ENCODE measurements at regions of chr12 and their contacts with region 1.

Region 1: GRCh38 chr12:43282106-43282505 is 269.9 kb downstream of the ADAMTS20 start:
- DNase-seq: no peak
- ATAC-seq: no peak
- H3K4me3 ChIP-seq: no peak overlapping the region
- H3K27ac ChIP-seq: no peak overlapping the region
- H3K4me1 ChIP-seq: peaks cover 0 to 21% (median 0%) of the 10 kb centered on the region in 12 donors
- H3K27me3 ChIP-seq: no peaks in the 10 kb centered on the region
- CTCF ChIP-seq: peak in 10 of 12 donors; percentile 10 to 65 (median 50)
- POLR2A ChIP-seq: no peak

Region 2: DNA sequence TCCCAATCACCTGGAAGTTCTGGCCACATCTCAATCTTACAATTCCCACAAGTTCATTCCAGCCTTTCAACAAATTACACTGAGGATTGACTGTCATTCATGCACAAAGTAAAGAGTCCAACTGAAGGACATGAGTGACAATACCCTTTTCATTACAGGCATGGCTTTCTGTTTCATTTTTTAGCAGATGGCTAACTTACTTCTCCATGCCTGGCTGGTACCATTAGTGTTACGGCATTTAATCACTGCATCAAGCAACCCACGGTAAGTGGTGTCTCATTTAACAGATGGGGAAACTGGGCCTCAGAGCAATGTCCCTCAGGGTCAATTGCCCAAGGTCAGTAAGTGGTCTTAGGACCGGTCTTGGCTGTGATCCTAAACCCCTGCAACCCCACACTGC is 807.0 kb before region 1 on chr12:
- intact Hi-C with region 1: loop called in 7 of 10 experiments (anchors 5 to 10 kb)
- DNase-seq: no peak
- ATAC-seq: no peak
- H3K4me3 ChIP-seq: no peak overlapping the region
- H3K27ac ChIP-seq: peak overlapping the region in 3 of 12 donors; percentile 1 to 35 (median 3)
- H3K4me1 ChIP-seq: peaks cover 3 to 67% (median 36%) of the 10 kb centered on the region in 12 donors
- H3K27me3 ChIP-seq: no peaks in the 10 kb centered on the region
- CTCF ChIP-seq: no peak
- POLR2A ChIP-seq: no peak

Region 3: GRCh38 chr12:42584651-42585111 is 697.4 kb before region 1 on chr12:
- intact Hi-C with region 1: loop called in 8 of 10 experiments (anchors 2 to 5 kb)
- DNase-seq: no peak
- ATAC-seq: no peak
- H3K4me3 ChIP-seq: peak overlapping the region in 3 of 12 donors; percentile 12 to 25 (median 13)
- H3K27ac ChIP-seq: peak overlapping the region in 4 of 12 donors; percentile 2 to 37 (median 20)
- H3K4me1 ChIP-seq: peaks cover 0 to 67% (median 32%) of the 10 kb centered on the region in 12 donors
- H3K27me3 ChIP-seq: peaks cover 0 to 22% (median 0%) of the 10 kb centered on the region in 9 donors
- CTCF ChIP-seq: no peak
- POLR2A ChIP-seq: no peak

Region 4: DNA sequence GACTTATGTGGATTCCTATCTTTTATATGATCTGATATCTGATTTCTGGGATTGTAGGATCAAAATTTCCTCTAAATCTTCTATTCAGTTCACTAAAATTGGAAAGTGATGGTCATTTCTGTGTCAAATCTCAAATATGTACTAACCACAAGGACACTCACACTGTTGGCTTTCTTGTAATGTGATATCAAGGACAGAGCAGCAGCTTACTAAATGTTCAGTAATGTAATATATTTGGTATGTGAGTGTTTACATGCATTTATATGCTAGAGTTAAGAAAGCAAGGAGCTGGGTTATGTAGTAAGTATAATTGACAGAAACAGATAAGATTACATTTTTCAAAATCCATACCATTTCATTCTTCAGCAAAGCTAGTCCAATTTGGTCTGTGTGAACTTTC is 460.0 kb after region 1 on chr12:
- intact Hi-C with region 1: no loop called
- DNase-seq: no peak
- ATAC-seq: no peak
- H3K4me3 ChIP-seq: no peak overlapping the region
- H3K27ac ChIP-seq: no peak overlapping the region
- H3K4me1 ChIP-seq: no peaks in the 10 kb centered on the region
- H3K27me3 ChIP-seq: no peaks in the 10 kb centered on the region
- CTCF ChIP-seq: no peak
- POLR2A ChIP-seq: no peak

Measured in heart left ventricle (tissue), 16 donors.